ENCODE measurements at regions of chr17 and their contacts with region 1.

Region 1: GRCh38 chr17:4599505-4600306 is 15.4 kb downstream of the SMTNL2 start:
- DNase-seq: no peak
- H3K4me3 ChIP-seq: no peak overlapping the region
- H3K27ac ChIP-seq: no peak overlapping the region
- H3K4me1 ChIP-seq: peaks cover 4% of the 10 kb centered on the region
- H3K27me3 ChIP-seq: peaks cover 6% of the 10 kb centered on the region
- CTCF ChIP-seq: no peak

Region 2: DNA sequence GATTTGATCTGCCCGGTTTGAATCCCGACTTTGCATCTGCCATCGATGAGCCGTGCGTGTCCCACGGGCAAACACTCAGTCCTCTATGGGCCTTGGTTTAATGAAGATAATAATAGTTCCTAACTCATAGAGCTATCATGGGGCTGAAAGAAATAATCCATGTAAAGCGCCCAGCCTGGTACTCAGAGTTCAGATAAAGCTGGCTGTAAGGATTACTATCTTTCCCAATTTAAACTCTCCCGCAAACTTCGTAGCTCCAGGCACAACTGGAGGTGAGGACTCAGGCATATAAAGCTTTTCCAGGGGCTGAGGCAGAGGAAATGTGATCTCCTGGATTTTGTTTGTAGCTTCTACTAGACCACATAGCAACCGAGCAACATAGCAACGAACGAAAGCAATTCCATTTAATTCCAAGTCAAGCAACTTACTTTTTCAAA is 25.5 kb after region 1 on chr17:
- CTCF ChIA-PET with region 1: no interaction called
- dilution Hi-C with region 1: no loop called
- in situ Hi-C with region 1: no loop called
- intact Hi-C with region 1: loop called (anchors 1 kb)
- DNase-seq: no peak
- H3K4me3 ChIP-seq: no peak overlapping the region
- H3K27ac ChIP-seq: no peak overlapping the region
- H3K4me1 ChIP-seq: no peaks in the 10 kb centered on the region
- H3K27me3 ChIP-seq: no peaks in the 10 kb centered on the region
- CTCF ChIP-seq: no peak